ENCODE measurements at regions of chr1 and their contacts with region 1.

Region 1: GRCh38 chr1:84442256-84442655 is 36.8 kb upstream of the RPF1 start:
- DNase-seq: peak; percentile 94
- ATAC-seq: peak; percentile 96
- H3K4me3 ChIP-seq: no peak overlapping the region
- H3K27ac ChIP-seq: no peak overlapping the region
- H3K4me1 ChIP-seq: 0 out of 2 replicates have a peak, but pooled peaks cover 2% of the 10 kb centered on the region
- H3K27me3 ChIP-seq: no peaks in the 10 kb centered on the region
- CTCF ChIP-seq: peak; percentile 82
- POLR2A ChIP-seq: no peak
- RAD21 ChIP-seq: peak; percentile 89

Region 2: GRCh38 chr1:84541679-84542078 is 99.4 kb after region 1 on chr1:
- CTCF ChIA-PET with region 1: no interaction called
- POLR2A ChIA-PET with region 1: no interaction called
- dilution Hi-C with region 1: no loop called
- in situ Hi-C with region 1: no loop called
- intact Hi-C with region 1: loop called (anchors 2 kb)
- DNase-seq: no peak
- ATAC-seq: no peak
- H3K4me3 ChIP-seq: no peak overlapping the region
- H3K27ac ChIP-seq: no peak overlapping the region
- H3K4me1 ChIP-seq: no peaks in the 10 kb centered on the region
- H3K27me3 ChIP-seq: no peaks in the 10 kb centered on the region
- CTCF ChIP-seq: no peak
- POLR2A ChIP-seq: no peak
- RAD21 ChIP-seq: no peak

Region 3: DNA sequence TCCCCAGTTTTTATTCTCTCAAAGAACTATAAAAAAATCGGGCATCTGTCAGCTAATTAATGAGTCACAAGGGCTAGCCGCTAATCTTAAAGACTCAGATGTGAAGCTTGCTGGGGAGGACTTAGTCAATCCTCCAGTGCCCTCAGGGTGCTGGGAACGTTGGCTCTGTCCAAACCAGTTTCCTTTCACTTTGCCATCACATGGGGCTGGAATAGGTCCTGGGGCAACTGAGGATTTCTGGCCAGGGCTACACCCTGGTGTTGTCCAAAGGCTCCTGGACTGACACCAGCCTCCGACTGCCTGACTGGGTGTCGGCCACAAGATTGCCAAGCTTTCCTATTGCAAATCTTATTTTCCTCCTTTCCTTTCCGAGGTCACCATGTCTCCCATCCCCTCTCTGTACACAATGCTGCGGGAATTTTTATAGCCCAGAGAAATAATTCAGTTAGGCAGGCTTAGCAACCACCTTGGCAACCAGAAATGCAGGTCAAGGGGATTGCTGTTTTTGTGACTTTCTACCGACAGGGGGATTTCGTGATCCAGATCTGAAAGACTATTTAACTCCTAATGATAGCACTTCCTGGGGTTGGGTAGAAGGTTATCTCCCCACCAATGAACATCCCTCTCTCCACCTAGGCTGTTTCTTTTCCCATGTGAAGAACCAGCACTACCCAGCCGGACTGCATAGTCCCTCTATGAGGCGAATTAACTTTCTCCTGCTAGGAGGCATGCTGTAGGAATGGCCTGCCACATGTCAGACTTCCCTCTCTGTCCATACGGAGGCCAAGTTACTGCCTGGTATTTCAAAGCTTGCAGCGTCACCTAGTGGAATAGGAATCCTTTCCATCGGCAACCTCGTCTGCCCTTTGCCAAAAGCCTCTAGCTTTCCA is 161.9 kb after region 1 on chr1:
- CTCF ChIA-PET with region 1: interaction called, 5 read pairs
- POLR2A ChIA-PET with region 1: no interaction called
- dilution Hi-C with region 1: no loop called
- in situ Hi-C with region 1: no loop called
- intact Hi-C with region 1: loop called (anchors 1 kb)
- DNase-seq: peak; percentile 81
- ATAC-seq: peak; percentile 54
- H3K4me3 ChIP-seq: peak overlapping the region; percentile 35; the same call in 1 of the 2 replicates
- H3K27ac ChIP-seq: 0 out of 2 replicates have a peak overlapping the region, but pooled peaks have one; percentile 15
- H3K4me1 ChIP-seq: peaks cover 14% of the 10 kb centered on the region
- H3K27me3 ChIP-seq: no peaks in the 10 kb centered on the region
- CTCF ChIP-seq: peak; percentile 82
- POLR2A ChIP-seq: no peak
- RAD21 ChIP-seq: peak; percentile 86

Region 4: DNA sequence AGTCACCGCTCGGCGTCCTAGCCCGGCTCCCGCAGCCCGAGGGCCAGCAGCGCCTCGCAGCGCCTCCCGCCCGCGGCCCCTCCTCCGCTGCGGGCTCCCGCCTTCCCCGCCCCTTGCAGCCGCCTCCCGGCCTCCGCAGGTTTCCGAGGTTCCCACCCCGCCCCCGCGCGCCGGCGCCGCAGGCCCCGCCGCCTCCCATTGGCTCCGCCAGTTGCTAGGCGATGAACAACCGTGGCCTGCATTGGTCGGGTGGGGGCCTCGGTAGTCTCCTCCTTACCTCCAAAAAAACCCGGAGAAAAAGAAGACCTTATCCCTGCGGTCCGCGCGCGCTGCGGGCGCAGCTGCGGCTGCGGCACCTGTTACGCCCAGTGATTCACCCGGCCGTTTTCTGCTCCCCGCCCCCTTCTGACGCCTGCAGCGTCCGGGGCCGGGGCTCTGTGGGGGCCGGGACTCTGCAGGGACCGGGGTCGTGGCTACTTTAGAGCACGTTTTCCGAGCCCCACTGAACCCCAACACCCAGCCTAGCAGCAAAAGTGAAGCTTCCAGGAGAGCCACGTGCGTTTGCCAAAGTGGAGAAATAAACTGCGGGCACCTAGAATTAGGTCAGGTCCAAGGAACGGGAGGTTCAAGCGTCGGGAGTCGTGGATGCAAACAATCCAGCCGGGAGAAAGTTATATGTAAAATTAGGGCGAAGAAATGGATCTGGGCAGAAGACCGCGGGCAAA is 248.3 kb after region 1 on chr1 and contains the start of gene SSX2IP:
- CTCF ChIA-PET with region 1: no interaction called
- POLR2A ChIA-PET with region 1: no interaction called
- dilution Hi-C with region 1: no loop called
- in situ Hi-C with region 1: no loop called
- intact Hi-C with region 1: loop called (anchors 5 kb)
- DNase-seq: peak; percentile 97
- ATAC-seq: peak; percentile 93
- H3K4me3 ChIP-seq: peak within 1 kb of the TSS; percentile 96
- H3K27ac ChIP-seq: peak within 1 kb of the TSS; percentile 80
- H3K4me1 ChIP-seq: peaks cover 4% of the 10 kb centered on the region
- H3K27me3 ChIP-seq: no peaks in the 10 kb centered on the region
- CTCF ChIP-seq: no peak
- POLR2A ChIP-seq: no peak
- RAD21 ChIP-seq: no peak
- total RNA-seq, gene SSX2IP: 13.4 and 22.8 TPM in 2 replicates

Region 5: GRCh38 chr1:84936116-84936810 is 494.0 kb after region 1 on chr1:
- CTCF ChIA-PET with region 1: no interaction called
- POLR2A ChIA-PET with region 1: no interaction called
- dilution Hi-C with region 1: no loop called
- in situ Hi-C with region 1: no loop called
- intact Hi-C with region 1: loop called (anchors 1 kb)
- DNase-seq: peak; percentile 72
- ATAC-seq: peak; percentile 92
- H3K4me3 ChIP-seq: no peak overlapping the region
- H3K27ac ChIP-seq: no peak overlapping the region
- H3K4me1 ChIP-seq: peaks cover 2% of the 10 kb centered on the region; the same call in 1 of the 2 replicates
- H3K27me3 ChIP-seq: peaks cover 12% of the 10 kb centered on the region
- CTCF ChIP-seq: peak; percentile 95
- POLR2A ChIP-seq: no peak
- RAD21 ChIP-seq: peak; percentile 96

Measured in IMR-90 (cell line).